ENCODE measurements at regions of chr7 and their contacts with region 1.

Region 1: DNA sequence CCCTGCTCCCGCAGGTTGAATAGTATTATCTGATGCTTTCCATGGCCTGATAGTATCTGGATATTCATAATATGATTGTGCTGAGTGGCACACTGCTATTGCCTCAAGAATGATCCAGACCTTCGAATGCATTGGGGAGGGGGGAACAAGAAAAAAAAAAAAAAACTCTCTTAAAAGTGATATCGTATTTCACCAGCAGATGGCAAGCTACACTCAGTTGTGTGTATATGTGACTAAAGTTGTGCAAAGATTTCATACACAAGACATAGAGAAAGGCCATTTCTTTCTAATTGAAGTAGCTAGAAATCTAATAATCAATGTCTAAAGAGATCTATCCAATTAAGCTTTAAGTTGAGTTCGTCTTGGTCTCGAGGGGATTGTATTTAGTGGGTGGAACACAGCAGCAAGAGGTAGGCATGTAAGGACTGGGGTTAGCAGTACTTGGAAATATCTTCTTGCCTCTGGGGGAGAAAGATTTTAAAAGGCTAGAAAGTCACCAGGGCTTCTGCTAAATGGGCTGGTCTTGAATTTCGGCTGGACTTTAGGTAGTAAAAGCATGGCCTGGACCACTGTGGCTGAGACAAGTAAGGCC is 15.3 kb downstream of the SFRP4 start:
- DNase-seq: no peak
- H3K4me3 Mint-ChIP-seq: no peak overlapping the region
- H3K27ac Mint-ChIP-seq: no peak overlapping the region
- H3K4me1 Mint-ChIP-seq: peaks cover 2% of the 10 kb centered on the region
- H3K27me3 Mint-ChIP-seq: peaks cover 4% of the 10 kb centered on the region

Region 2: DNA sequence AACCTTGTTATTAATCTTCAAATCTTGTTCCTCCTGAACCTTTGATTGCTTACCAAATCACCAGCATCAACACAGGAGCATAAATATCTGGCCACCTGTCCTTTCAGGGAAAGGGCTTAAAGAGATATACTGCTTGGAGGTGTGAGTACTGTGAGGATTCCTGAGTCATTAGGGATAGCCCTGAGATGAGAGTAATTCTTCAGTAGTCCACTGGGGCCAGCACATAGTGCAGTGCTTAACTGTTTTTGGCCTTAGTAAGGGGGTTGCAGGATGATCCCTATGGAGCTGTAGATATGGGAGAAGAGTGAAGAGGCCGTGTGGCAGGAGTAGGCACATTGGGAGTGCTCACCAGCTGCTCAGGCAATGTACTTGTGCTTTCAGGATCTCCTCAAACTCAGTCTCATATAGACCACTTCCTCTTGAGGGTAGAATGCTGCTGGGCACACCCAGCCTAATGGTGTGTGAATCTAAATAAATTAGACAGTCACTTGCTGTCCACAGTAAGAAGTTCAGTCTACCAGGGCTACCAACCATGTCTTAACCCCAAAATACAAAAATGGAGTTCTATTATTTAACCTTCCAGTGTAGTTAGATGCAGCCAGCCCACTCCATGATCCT is 244.3 kb before region 1 on chr7:
- CTCF ChIA-PET with region 1: no interaction called
- intact Hi-C with region 1: no loop called
- DNase-seq: no peak
- H3K4me3 Mint-ChIP-seq: no peak overlapping the region
- H3K27ac Mint-ChIP-seq: no peak overlapping the region
- H3K4me1 Mint-ChIP-seq: no peaks in the 10 kb centered on the region
- H3K27me3 Mint-ChIP-seq: peaks cover 4% of the 10 kb centered on the region

Region 3: GRCh38 chr7:37916673-37917660 is 15.6 kb after region 1 on chr7 and contains the start of gene SFRP4:
- CTCF ChIA-PET with region 1: interaction called, 14 read pairs
- intact Hi-C with region 1: no loop called
- DNase-seq: peak; percentile 17
- H3K4me3 Mint-ChIP-seq: peak within 1 kb of the TSS; percentile 22
- H3K27ac Mint-ChIP-seq: no peak within 1 kb of the TSS
- H3K4me1 Mint-ChIP-seq: peaks cover 14% of the 10 kb centered on the region
- H3K27me3 Mint-ChIP-seq: peaks cover 58% of the 10 kb centered on the region
- total RNA-seq, gene SFRP4: not detected

Region 4: DNA sequence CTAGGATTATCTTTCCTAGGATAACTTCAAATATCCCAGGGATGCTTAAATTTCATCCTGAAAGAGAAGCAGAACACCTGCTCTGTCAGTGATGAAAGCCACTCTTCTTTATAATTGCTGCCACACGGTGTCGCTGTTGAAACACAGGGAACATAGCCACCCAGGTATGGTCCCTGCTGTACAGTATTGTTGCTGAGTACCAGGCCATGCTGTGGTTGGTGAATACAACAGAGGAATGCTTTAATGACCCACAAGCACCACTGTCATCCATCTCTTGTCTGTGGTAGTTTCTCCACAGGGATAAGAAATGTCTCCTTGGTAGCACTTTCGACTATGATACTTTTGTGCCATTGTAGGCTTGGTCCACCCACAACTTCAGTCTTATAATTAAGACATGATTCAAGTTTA is 206.2 kb after region 1 on chr7:
- CTCF ChIA-PET with region 1: interaction called, 7 read pairs
- intact Hi-C with region 1: loop called (anchors 1 kb)
- DNase-seq: peak; percentile 84
- H3K4me3 Mint-ChIP-seq: no peak overlapping the region
- H3K27ac Mint-ChIP-seq: no peak overlapping the region
- H3K4me1 Mint-ChIP-seq: no peaks in the 10 kb centered on the region
- H3K27me3 Mint-ChIP-seq: peaks cover 8% of the 10 kb centered on the region

Region 5: GRCh38 chr7:38222481-38223096 is 321.3 kb after region 1 on chr7:
- CTCF ChIA-PET with region 1: no interaction called
- intact Hi-C with region 1: loop called (anchors 1 kb)
- DNase-seq: peak; percentile 21
- H3K4me3 Mint-ChIP-seq: no peak overlapping the region
- H3K27ac Mint-ChIP-seq: no peak overlapping the region
- H3K4me1 Mint-ChIP-seq: peaks cover 2% of the 10 kb centered on the region
- H3K27me3 Mint-ChIP-seq: no peaks in the 10 kb centered on the region

Region 6: GRCh38 chr7:38318803-38319416 is 417.6 kb after region 1 on chr7:
- CTCF ChIA-PET with region 1: no interaction called
- intact Hi-C with region 1: loop called (anchors 5 kb)
- DNase-seq: peak; percentile 33
- H3K4me3 Mint-ChIP-seq: peak overlapping the region; percentile 27
- H3K27ac Mint-ChIP-seq: no peak overlapping the region
- H3K4me1 Mint-ChIP-seq: peaks cover 26% of the 10 kb centered on the region
- H3K27me3 Mint-ChIP-seq: no peaks in the 10 kb centered on the region